Esophagus muscularis mucosa (tissue), 4 donors: ENCODE measurements at regions of chr2 and their contacts with region 1.

Region 1: GRCh38 chr2:10448208-10448645 is at the start of gene ODC1:
- DNase-seq: peak; percentile 98
- H3K4me3 ChIP-seq: peak within 1 kb of the TSS; percentile 64 to 88 (median 76)
- H3K27ac ChIP-seq: peak within 1 kb of the TSS; percentile 97 to 98 (median 98)
- H3K4me1 ChIP-seq: peaks cover 38 to 69% (median 63%) of the 10 kb centered on the region in 4 donors
- H3K27me3 ChIP-seq: no peaks in the 10 kb centered on the region
- CTCF ChIP-seq: no peak
- EP300 ChIP-seq: peak; percentile 32
- POLR2A ChIP-seq: no peak
- total RNA-seq, gene ODC1: 105 to 142 (median 121) TPM

Region 2: DNA sequence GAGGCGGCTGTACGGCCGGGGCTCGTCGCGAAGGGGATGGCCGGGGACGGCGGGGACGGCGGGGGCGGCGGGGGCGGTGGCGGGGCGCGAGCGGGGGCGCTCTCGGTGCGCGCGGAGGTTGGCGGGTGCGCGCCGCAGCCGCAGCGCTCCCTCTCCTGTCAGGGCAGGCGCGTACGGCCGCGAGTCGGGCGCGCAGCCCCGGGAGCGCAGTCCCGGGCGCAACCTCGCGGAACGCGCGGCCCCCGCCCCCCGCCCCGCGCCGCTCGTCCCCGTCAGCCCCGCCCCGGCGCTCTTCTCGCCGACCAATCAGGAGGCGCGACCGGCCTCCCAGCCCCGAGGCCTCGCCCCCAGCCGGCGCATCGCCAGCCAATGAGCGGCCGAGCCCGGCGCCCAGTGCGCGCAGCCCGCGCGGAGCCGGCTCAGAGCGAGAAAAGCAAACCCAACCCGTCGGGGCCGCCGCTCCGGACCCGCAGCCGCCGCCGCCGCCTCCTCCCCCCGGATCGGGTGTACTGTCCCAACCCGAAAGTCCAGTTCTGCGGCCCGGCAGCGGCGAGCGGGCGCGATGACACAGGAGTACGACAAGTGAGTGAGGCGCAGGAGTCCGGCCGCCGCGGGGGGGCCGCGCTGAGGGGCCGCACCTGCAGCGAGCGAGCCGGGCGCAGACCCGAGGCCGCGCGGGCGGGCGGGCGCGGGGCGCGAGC is 496.8 kb before region 1 on chr2 and contains the start of gene GRHL1:
- intact Hi-C with region 1: loop called (anchors 10 kb)
- DNase-seq: peak; percentile 96
- H3K4me3 ChIP-seq: peak within 1 kb of the TSS; percentile 69 to 85 (median 80)
- H3K27ac ChIP-seq: peak within 1 kb of the TSS; percentile 68 to 80 (median 78)
- H3K4me1 ChIP-seq: peaks cover 0 to 19% (median 15%) of the 10 kb centered on the region in 4 donors
- H3K27me3 ChIP-seq: peaks cover 0 to 4% (median 0%) of the 10 kb centered on the region in 4 donors
- CTCF ChIP-seq: peak in 1 of 3 experiments; percentile 7
- EP300 ChIP-seq: no peak
- POLR2A ChIP-seq: no peak
- total RNA-seq, gene GRHL1: 0.86 to 5.1 (median 2.6) TPM

Region 3: DNA sequence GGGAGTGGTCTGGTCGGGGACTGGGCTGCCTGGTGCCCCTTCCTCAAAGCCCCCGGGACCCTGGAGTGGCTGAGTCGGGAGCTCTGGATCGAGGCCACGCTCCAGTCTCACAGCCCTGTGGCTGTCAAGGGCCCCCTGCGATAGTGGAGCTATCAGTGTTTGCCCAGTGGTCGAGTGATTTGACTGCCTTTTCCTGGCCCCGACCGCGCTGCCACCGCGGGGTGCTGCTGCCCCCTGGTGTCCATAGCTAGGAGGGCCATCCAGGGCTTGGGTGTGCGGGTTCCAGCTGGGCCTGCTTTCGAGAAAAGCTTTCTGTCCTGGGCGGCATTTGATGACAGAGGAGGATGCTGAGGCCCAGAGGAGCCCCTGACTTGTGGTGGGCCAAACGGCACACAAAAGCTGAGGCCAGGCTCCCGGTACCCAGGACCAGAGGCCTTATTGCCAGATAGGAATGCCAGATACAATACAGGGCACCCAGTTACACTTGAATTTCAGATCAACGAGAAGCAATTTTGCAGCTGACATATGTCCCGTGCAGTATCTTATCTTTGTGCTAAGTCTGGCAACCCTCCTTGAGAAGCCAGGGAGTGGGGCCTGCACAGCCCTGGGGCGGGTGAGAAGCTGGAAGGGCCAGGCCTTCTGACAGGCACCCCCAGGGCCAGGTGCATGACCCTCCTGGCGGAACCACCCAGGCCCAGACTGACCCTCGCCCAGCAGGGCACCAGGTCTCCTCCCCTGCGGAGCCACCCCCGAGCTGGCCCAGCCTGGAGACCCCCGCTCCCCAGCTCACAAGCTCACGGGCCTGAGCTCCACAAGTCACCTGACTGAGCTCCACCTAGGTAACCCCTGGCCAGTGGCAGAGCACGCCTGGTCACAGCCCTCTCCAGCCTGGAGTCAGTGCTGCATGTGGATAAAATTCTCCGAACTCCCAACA is 13.1 kb before region 1 on chr2:
- intact Hi-C with region 1: no loop called
- DNase-seq: no peak
- H3K4me3 ChIP-seq: no peak overlapping the region
- H3K27ac ChIP-seq: no peak overlapping the region
- H3K4me1 ChIP-seq: peaks cover 12 to 33% (median 28%) of the 10 kb centered on the region in 4 donors
- H3K27me3 ChIP-seq: peaks cover 0 to 30% (median 4%) of the 10 kb centered on the region in 4 donors
- CTCF ChIP-seq: peak in 2 of 3 experiments; percentile 94
- EP300 ChIP-seq: no peak
- POLR2A ChIP-seq: no peak

Region 4: DNA sequence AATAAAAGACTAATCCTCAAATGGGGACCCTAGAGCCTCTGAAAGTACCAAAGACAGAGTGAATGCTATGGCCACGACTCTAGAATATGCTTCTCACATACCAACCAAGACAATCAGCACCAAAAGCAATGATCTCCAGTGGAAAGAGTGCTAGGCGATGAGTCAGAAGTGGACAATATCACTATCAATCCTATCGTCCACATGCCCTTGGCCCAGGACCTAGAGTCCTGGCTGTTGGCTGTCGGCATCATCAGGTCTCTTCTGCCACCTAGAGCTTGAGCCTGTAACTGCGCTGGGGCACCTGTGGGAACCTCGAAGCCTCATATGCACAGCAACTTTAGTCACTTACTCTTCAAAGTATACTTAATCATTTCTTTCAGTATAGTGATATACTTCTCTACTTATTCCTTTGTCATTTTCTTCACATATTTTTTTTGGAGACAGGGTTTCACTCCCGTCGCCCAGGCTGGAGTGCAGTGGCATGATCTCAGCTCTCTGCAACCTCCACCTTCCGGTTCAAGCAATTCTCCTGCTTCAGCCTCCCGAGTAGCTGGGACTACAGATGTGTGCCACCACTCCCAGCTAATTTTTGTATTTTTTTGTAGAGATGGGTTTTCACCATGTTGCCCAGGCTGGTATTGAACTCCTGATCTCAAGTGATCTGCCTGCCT is 211.8 kb after region 1 on chr2:
- intact Hi-C with region 1: loop called (anchors 10 kb)
- DNase-seq: no peak
- H3K4me3 ChIP-seq: no peak overlapping the region
- H3K27ac ChIP-seq: no peak overlapping the region
- H3K4me1 ChIP-seq: peaks cover 0 to 5% (median 0%) of the 10 kb centered on the region in 4 donors
- H3K27me3 ChIP-seq: no peaks in the 10 kb centered on the region
- CTCF ChIP-seq: peak; percentile 35 to 63 (median 38)
- EP300 ChIP-seq: no peak
- POLR2A ChIP-seq: no peak